CD4-positive, alpha-beta T cell (primary cell): ENCODE measurements at regions of chr3 and their contacts with region 1.

Region 1: DNA sequence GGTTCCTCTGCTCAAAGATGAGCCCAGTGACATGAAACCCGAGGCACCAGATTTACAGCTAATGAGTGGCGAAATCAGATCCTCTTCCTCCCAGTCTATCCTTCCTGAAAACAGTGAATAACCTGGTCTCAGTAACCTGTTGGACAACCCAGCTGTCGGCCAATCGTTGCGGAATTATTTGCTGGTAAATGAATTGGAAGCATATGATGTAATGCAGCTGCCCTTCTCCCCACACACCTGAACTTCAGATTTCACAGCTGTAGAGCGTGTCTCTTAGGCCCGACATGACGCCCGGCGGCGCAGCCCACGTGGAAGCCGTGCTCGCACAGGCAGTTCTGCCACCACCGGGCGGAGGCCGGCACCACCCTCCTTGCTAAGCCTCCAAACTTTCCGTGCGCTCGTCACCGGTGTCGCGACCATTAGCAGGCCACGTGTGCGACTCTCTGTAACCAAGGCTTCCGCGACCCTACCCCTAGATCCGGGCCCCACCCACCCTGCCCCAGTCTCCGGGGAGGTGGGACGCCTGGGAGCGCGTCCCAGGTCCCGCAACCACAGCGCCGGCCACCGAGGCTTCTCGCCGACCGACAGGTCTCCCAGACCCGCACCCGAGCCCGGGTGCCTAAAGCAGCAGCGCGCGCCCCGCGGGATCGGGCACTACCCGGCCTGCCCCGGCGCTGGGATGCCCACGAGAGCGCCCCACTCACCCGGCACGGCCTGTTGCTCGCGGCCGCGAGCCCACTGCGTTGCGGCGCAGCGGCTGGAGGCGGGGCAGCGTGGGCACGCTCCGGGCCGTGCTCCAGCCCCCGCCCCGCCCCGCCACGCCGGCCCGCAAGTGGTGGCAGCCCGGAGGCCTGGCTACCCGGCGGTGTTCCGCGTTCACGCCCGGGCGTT is at the start of gene RIOX2:
- DNase-seq: peak; percentile 52 to 91 (median 72)
- ATAC-seq: peak; percentile 93
- H3K4me3 ChIP-seq: peak within 1 kb of the TSS; percentile 63
- H3K4me3 Mint-ChIP-seq: peak within 1 kb of the TSS; percentile 91
- H3K27ac ChIP-seq: peak within 1 kb of the TSS in 1 of 2 donors; percentile 37
- H3K27ac Mint-ChIP-seq: peak within 1 kb of the TSS; percentile 91
- H3K4me1 ChIP-seq: peaks cover 34% of the 10 kb centered on the region
- H3K4me1 Mint-ChIP-seq: peaks cover 72% of the 10 kb centered on the region
- H3K27me3 ChIP-seq: no peaks in the 10 kb centered on the region
- H3K27me3 Mint-ChIP-seq: no peaks in the 10 kb centered on the region
- CTCF ChIP-seq: no peak
- total RNA-seq, gene RIOX2: 13.1 to 13.5 TPM

Region 2: GRCh38 chr3:97815149-97815917 is 156.6 kb before region 1 on chr3:
- CTCF ChIA-PET with region 1: interaction called, 6 read pairs
- POLR2A ChIA-PET with region 1: interaction called, 20 read pairs
- intact Hi-C with region 1: loop called (anchors 5 to 10 kb)
- DNase-seq: peak in 10 of 14 experiments; percentile 14 to 62 (median 32)
- ATAC-seq: peak; percentile 95
- H3K4me3 ChIP-seq: no peak overlapping the region
- H3K4me3 Mint-ChIP-seq: no peak overlapping the region
- H3K27ac ChIP-seq: no peak overlapping the region
- H3K27ac Mint-ChIP-seq: no peak overlapping the region
- H3K4me1 ChIP-seq: peaks cover 5% of the 10 kb centered on the region
- H3K4me1 Mint-ChIP-seq: no peaks in the 10 kb centered on the region
- H3K27me3 ChIP-seq: no peaks in the 10 kb centered on the region
- H3K27me3 Mint-ChIP-seq: peaks cover 19% of the 10 kb centered on the region
- CTCF ChIP-seq: no peak

Region 3: DNA sequence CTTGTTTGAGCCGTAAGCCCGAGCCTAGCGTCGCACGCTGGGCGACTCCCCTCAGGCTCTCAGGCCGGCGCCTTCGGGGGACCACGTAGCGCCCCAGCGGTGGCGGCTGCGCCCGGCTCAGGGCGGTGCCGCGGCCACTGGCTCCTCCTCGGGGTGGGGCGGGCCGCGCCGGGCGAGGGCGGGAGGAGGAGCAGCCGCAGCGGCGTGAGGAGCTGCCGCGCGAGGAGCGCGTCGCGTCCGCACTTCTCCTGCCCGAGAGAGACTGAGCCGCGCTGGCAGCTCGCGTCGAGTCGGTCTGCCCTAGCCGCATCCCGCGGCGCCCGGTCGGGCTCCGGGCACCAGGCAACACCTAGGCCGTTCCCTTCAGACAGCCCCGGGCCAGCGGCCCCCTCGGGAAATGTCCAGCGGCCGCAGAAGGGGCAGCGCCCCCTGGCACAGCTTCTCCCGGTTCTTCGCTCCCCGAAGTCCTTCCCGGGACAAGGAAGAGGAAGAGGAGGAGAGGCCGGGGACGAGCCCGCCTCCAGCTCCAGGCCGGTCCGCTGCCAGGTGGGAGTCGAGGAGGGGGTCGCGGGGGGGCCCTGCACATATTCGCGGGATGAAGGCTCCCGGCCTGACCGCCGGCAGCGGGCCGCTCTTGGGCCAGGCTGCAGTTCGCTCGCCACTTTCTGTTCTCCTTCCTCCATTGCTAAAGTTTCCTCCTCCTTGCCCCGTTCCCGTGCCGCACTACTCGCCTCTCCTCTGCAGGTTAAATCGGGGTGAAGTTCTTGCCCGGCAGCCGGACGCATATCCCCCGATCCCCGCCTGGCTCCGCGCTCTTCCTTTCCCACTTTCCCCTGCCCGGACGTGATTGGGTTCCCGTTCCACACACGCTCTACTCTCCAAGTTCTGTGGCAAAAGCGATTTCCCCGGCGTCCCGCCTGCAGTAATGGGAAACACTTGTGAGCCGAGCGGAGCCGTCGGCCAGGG is 149.8 kb before region 1 on chr3 and contains the start of gene CRYBG3:
- CTCF ChIA-PET with region 1: interaction called, 6 read pairs
- POLR2A ChIA-PET with region 1: interaction called, 20 read pairs
- intact Hi-C with region 1: loop called (anchors 5 to 10 kb)
- DNase-seq: peak; percentile 60 to 91 (median 76)
- ATAC-seq: peak; percentile 96
- H3K4me3 ChIP-seq: peak within 1 kb of the TSS; percentile 81
- H3K4me3 Mint-ChIP-seq: peak within 1 kb of the TSS; percentile 97
- H3K27ac ChIP-seq: peak within 1 kb of the TSS in 1 of 2 donors; percentile 68
- H3K27ac Mint-ChIP-seq: peak within 1 kb of the TSS; percentile 78
- H3K4me1 ChIP-seq: peaks cover 25% of the 10 kb centered on the region
- H3K4me1 Mint-ChIP-seq: peaks cover 21% of the 10 kb centered on the region
- H3K27me3 ChIP-seq: no peaks in the 10 kb centered on the region
- H3K27me3 Mint-ChIP-seq: peaks cover 20% of the 10 kb centered on the region
- CTCF ChIP-seq: no peak
- total RNA-seq, gene CRYBG3: 2.2 to 2.4 TPM

Region 4: DNA sequence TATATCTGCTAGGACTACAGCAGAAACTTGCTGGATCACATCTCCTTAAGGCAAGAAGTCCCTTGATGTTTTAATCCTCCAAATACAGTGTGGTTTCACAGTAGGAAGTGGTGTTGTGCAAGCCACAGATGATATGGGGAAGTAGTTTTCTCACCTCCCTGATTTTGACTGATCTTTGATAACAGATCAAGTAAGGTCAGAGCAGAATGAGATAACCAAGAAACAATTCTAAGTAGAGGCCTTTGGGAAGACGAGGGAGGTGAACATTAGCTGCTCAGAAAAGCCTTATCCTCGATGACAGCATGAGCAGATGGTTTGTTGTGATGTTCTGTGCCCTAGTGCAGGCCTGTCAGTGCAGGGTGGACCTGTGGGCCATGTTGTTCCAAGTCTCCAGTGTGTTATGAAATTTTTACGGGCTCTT is 61.0 kb before region 1 on chr3:
- CTCF ChIA-PET with region 1: no interaction called
- POLR2A ChIA-PET with region 1: interaction called, 3 read pairs
- intact Hi-C with region 1: loop called in 1 of 2 experiments (anchors 10 kb)
- DNase-seq: peak in 4 of 14 experiments; percentile 6 to 78 (median 58)
- ATAC-seq: peak; percentile 83
- H3K4me3 ChIP-seq: no peak overlapping the region
- H3K4me3 Mint-ChIP-seq: peak overlapping the region; percentile 83
- H3K27ac ChIP-seq: peak overlapping the region in 1 of 2 donors; percentile 12
- H3K27ac Mint-ChIP-seq: peak overlapping the region; percentile 91
- H3K4me1 ChIP-seq: peaks cover 15% of the 10 kb centered on the region
- H3K4me1 Mint-ChIP-seq: peaks cover 41% of the 10 kb centered on the region
- H3K27me3 ChIP-seq: no peaks in the 10 kb centered on the region
- H3K27me3 Mint-ChIP-seq: no peaks in the 10 kb centered on the region
- CTCF ChIP-seq: no peak

Region 5: DNA sequence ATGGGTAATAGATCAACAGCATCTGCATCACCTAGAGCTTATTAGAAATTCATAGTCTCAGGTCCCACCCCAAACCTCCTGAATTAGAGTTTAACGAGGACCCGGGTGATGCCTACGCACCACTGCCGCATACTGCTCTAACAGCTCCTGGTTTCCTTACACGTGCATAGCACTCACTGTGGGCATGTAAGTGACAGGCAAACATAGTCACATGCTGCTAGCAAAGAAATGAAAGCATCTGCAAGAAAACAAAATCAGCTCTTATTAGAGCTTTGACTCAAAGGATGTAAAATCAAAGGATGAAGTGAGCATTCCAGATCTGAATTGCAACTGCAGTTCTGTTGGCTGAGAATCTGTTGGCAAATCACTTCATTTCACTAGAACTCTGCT is 19.4 kb after region 1 on chr3:
- CTCF ChIA-PET with region 1: no interaction called
- POLR2A ChIA-PET with region 1: interaction called, 16 read pairs
- intact Hi-C with region 1: no loop called
- DNase-seq: peak in 7 of 14 experiments; percentile 6 to 57 (median 43)
- ATAC-seq: peak; percentile 98
- H3K4me3 ChIP-seq: peak overlapping the region; percentile 27
- H3K4me3 Mint-ChIP-seq: peak overlapping the region; percentile 77
- H3K27ac ChIP-seq: peak overlapping the region in 1 of 2 donors; percentile 33
- H3K27ac Mint-ChIP-seq: peak overlapping the region; percentile 83
- H3K4me1 ChIP-seq: peaks cover 12% of the 10 kb centered on the region
- H3K4me1 Mint-ChIP-seq: peaks cover 36% of the 10 kb centered on the region
- H3K27me3 ChIP-seq: no peaks in the 10 kb centered on the region
- H3K27me3 Mint-ChIP-seq: no peaks in the 10 kb centered on the region
- CTCF ChIP-seq: no peak

Region 6: DNA sequence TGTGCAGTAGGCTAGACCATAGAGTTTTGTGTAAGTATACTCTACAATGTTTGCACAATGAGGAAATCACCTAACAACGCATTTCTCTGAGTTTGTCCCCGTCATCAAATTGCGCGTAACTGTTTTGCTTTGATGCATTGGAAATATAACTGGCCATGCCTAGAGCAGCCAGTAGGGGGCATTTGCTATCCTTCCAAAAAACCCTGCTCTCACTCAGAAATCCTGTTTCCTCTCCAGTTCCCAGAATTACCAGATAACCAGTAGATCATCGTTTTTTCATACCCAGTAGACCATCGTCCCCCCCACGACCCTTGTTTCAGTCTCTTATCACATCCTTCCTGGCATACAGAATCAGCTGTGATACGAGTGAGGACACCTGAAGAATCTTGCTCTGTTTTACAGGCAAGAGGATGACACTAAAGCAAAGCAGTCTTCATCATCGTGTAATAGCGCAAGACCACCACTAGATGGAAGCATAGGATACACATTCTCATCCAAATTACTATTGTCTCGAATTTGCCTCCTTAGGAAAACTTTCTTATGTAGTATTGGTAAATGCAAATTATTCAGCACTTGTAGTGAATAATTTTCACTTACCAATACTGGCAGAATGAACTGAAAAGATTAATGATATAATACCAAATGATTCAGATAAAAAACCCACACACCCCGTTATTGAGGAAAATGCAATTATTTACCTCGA is 67.6 kb after region 1 on chr3:
- CTCF ChIA-PET with region 1: interaction called, 3 read pairs
- POLR2A ChIA-PET with region 1: no interaction called
- intact Hi-C with region 1: loop called in 1 of 2 experiments (anchors 5 kb)
- DNase-seq: peak; percentile 40 to 91 (median 62)
- ATAC-seq: peak; percentile 93
- H3K4me3 ChIP-seq: peak overlapping the region; percentile 45
- H3K4me3 Mint-ChIP-seq: peak overlapping the region; percentile 72
- H3K27ac ChIP-seq: peak overlapping the region; percentile 59 to 70
- H3K27ac Mint-ChIP-seq: peak overlapping the region; percentile 90
- H3K4me1 ChIP-seq: no peaks in the 10 kb centered on the region
- H3K4me1 Mint-ChIP-seq: no peaks in the 10 kb centered on the region
- H3K27me3 ChIP-seq: no peaks in the 10 kb centered on the region
- H3K27me3 Mint-ChIP-seq: peaks cover 15% of the 10 kb centered on the region
- CTCF ChIP-seq: peak; percentile 98

Region 7: DNA sequence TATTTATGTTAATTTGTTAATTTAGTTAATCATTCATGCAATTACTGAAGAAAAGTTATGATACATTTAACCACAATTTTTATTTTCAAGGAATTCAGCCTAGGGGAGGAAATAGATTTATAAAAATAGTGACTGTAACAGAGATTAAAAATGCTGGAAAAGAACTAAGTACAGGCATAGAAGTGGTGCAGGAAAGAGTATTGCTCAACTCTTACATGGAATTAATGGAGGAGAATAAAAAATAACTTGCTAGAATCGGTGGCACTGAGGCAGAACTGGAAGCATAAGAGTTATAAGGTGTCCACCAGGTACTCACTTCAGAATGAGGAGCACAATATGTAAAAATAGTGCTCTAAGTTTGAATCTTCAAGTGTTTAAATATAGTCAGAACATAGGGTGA is 101.6 kb after region 1 on chr3:
- CTCF ChIA-PET with region 1: no interaction called
- POLR2A ChIA-PET with region 1: no interaction called
- intact Hi-C with region 1: no loop called
- DNase-seq: no peak
- ATAC-seq: no peak
- H3K4me3 ChIP-seq: no peak overlapping the region
- H3K4me3 Mint-ChIP-seq: no peak overlapping the region
- H3K27ac ChIP-seq: no peak overlapping the region
- H3K27ac Mint-ChIP-seq: no peak overlapping the region
- H3K4me1 ChIP-seq: no peaks in the 10 kb centered on the region
- H3K4me1 Mint-ChIP-seq: no peaks in the 10 kb centered on the region
- H3K27me3 ChIP-seq: no peaks in the 10 kb centered on the region
- H3K27me3 Mint-ChIP-seq: peaks cover 22% of the 10 kb centered on the region
- CTCF ChIP-seq: no peak

Region 8: GRCh38 chr3:98893740-98894139 is 921.8 kb after region 1 on chr3:
- CTCF ChIA-PET with region 1: no interaction called
- POLR2A ChIA-PET with region 1: no interaction called
- intact Hi-C with region 1: loop called in 1 of 2 experiments (anchors 10 kb)
- DNase-seq: no peak
- ATAC-seq: no peak
- H3K4me3 ChIP-seq: no peak overlapping the region
- H3K4me3 Mint-ChIP-seq: no peak overlapping the region
- H3K27ac ChIP-seq: no peak overlapping the region
- H3K27ac Mint-ChIP-seq: no peak overlapping the region
- H3K4me1 ChIP-seq: no peaks in the 10 kb centered on the region
- H3K4me1 Mint-ChIP-seq: no peaks in the 10 kb centered on the region
- H3K27me3 ChIP-seq: no peaks in the 10 kb centered on the region
- H3K27me3 Mint-ChIP-seq: no peaks in the 10 kb centered on the region
- CTCF ChIP-seq: no peak